GM23248 (cell line): ENCODE measurements at regions of chr17 and their contacts with region 1.

Region 1: DNA sequence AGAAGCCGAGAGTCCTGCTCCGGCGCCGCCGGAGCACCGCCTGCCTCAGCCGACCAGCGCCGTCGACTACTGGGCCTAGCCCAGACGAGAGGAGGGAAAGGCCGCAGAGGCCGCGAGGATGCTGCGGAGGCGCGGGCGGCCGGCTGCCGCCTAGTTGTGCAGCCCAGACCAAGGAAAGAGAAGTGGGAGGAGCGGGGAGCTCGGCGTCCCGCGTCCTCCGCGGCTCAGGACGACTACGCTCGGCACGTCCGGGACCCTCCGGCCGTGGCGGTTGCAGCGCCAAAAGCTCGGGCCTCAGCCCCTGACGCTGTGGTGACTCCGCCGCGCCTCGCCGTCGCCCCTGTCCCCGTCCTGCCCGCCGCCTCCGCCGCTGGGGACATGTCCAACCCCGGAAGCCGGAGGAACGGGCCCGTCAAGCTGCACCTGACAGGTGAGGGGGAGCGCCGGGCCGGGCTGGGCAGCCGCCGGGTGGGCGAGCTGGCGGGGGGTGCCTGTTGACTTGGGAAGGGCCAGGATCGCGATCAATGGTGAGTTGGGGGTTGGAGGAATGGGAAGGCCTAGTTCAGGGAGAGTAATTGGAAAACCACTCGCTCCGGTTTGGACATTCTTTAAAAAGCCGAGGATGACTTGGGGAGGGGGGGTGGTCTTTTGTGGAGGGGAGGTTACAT is 37.7 kb downstream of the RNF135 start:
- DNase-seq: peak; percentile 82
- H3K4me3 ChIP-seq: peak overlapping the region; percentile 71
- H3K27ac ChIP-seq: no peak overlapping the region
- H3K4me1 ChIP-seq: peaks cover 23% of the 10 kb centered on the region
- H3K27me3 ChIP-seq: no peaks in the 10 kb centered on the region

Region 2: DNA sequence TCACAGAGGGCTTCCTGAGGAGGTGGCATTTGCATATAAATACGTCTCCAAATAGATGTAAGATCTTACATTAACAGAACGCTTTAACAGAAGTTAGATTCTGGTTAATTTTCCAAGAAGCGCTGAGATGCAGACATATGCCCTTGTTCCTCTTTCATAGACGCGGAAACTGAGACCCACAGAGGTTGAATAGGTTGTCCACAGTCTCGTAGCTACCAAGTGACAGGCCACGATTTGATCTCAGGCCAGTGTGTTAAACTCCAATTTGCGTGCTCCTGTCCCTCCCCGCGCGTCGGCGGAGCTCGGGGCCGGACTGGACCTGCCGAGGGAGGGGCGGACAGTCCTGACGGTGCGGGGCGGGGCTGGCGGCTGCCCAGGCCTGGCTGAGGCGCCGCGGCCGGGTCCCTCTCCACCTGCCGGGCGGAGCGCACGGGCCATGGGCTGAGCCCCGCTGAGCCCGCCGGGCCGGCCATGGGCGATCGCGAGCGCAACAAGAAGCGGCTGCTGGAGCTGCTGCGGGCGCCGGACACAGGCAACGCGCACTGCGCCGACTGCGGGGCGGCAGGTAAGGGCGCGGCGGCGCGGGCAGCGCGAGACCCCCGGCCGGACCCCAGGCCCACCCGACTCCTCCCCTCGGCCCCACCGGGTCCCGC is 86.8 kb before region 1 on chr17 and contains the start of gene ADAP2:
- in situ Hi-C with region 1: no loop called
- DNase-seq: peak; percentile 41
- H3K4me3 ChIP-seq: peak within 1 kb of the TSS; percentile 62
- H3K27ac ChIP-seq: no peak within 1 kb of the TSS
- H3K4me1 ChIP-seq: peaks cover 3% of the 10 kb centered on the region; the same call in 1 of the 2 replicates
- H3K27me3 ChIP-seq: peaks cover 22% of the 10 kb centered on the region
- total RNA-seq, gene ADAP2: not detected in 2 replicates

Region 3: DNA sequence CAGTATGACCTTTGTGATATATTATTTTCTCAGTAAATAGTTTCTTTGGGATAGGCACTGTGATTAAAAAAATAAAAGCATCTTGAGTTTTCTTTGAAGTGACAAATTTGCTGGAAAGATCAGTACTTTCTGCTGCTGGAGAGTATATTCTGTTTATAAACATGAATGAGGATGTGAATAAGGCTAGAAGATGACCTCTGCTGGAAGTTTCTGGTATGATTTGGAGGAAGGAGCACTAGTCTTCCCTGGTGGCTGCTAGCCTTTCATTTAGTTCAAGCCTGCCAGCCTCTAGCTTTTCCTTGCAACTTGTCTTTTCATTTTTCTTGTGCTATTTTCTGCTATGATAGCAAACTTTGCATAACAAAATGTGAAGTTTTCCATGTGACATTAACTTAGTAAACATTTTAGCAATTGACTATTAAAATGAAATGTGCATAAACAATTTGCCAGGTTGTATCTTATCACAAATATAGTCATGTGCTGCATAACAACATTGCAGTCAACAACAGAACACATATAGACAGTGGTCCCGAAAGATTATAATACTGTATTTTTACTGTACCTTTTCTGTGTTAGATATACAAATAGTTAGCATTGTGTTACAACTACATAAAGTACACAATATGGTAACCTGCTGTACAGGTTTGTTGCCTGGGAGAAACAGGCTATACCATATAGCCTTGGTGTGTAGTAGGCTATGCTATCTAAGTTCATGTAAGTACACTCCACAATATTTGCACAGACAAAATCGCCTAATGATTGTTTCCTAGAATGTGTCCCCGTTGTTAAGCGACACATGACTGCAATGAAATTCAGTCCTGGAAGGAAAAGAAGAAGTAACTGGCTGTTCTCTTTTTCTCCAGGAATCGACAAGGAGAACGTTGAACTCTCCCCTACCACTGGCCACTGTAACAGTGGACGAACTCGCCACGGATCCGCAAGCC is 364.9 kb after region 1 on chr17:
- in situ Hi-C with region 1: loop called (anchors 25 kb)
- DNase-seq: peak; percentile 75
- H3K4me3 ChIP-seq: no peak overlapping the region
- H3K27ac ChIP-seq: no peak overlapping the region
- H3K4me1 ChIP-seq: peaks cover 12% of the 10 kb centered on the region
- H3K27me3 ChIP-seq: no peaks in the 10 kb centered on the region